Activated B cell treated with CpG ODN at 0.5 μM for 24 hours (primary cell): ENCODE measurements at regions of chr9 and their contacts with region 1.

Region 1: DNA sequence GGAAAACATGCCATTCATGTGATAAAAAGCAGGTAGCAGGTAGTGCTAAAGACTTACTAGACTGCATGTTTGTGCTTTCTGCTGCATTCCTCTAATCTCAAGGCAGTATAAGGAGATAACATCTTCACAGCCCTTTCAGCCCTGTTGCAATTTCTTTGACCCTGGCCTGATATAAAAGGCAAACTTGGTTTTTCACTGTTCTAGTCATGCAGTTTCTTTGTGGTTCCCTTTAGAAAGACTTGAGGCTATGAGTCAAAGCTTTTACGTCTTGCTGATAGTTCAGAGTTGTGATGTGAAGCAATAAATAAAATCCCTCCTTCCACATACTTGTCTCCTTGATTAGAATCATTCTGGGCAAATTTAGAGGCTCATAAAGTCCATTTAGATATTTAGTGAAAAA is 88.6 kb upstream of the CDKN2B start:
- DNase-seq: no peak
- ATAC-seq: no peak
- H3K4me3 Mint-ChIP-seq: no peak overlapping the region
- H3K27ac Mint-ChIP-seq: no peak overlapping the region
- H3K4me1 Mint-ChIP-seq: peaks cover 3% of the 10 kb centered on the region
- H3K27me3 Mint-ChIP-seq: peaks cover 9% of the 10 kb centered on the region
- CTCF ChIP-seq: no peak

Region 2: GRCh38 chr9:22134390-22134789 is 36.7 kb after region 1 on chr9:
- CTCF ChIA-PET with region 1: no interaction called
- POLR2A ChIA-PET with region 1: no interaction called
- intact Hi-C with region 1: loop called (anchors 5 kb)
- DNase-seq: no peak
- ATAC-seq: no peak
- H3K4me3 Mint-ChIP-seq: no peak overlapping the region
- H3K27ac Mint-ChIP-seq: no peak overlapping the region
- H3K4me1 Mint-ChIP-seq: peaks cover 15% of the 10 kb centered on the region
- H3K27me3 Mint-ChIP-seq: no peaks in the 10 kb centered on the region
- CTCF ChIP-seq: no peak